Activated CD4-positive, alpha-beta T cell treated with anti-CD3 and anti-CD28 coated beads for 36 hours (primary cell): ENCODE measurements at regions of chr1 and their contacts with region 1.

Region 1: GRCh38 chr1:222307621-222308020 is 240.3 kb downstream of the HHIPL2 start:
- DNase-seq: no peak
- ATAC-seq: no peak
- H3K4me3 Mint-ChIP-seq: no peak overlapping the region
- H3K27ac Mint-ChIP-seq: no peak overlapping the region
- H3K4me1 Mint-ChIP-seq: no peaks in the 10 kb centered on the region
- H3K27me3 Mint-ChIP-seq: no peaks in the 10 kb centered on the region

Region 2: DNA sequence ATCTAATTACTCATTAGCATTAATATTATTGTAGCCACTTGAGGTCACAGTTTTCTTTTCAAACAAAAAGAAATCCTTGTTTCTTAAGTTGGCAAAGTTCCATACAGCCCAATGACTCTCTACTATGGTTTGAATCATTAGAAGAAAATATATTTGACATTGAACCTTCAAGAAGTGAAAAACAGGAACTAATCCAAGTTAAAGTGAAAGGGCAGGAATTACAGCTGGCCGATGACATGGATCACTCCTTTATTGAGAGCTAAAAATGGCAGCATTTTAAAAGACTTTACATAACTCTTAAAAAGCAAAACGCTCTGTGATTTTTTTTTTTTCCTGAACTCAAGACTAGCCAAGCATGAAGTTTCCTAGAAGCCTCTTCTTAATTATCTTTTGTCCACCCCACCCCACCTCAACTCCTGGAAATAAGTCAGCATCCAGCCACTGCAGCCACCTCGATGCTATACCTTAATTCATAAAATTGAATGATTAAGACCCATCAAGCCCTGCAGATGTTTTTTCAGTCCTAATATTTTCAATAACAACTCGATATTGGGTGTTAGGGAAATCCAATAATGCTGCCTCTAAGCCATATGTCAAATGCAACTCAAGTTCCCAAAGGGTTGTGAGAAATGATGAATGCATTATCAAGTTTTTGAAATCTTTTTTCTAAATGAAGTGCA is 82.8 kb before region 1 on chr1:
- CTCF ChIA-PET with region 1: no interaction called
- POLR2A ChIA-PET with region 1: no interaction called
- intact Hi-C with region 1: no loop called
- DNase-seq: no peak
- ATAC-seq: no peak
- H3K4me3 Mint-ChIP-seq: no peak overlapping the region
- H3K27ac Mint-ChIP-seq: no peak overlapping the region
- H3K4me1 Mint-ChIP-seq: no peaks in the 10 kb centered on the region
- H3K27me3 Mint-ChIP-seq: no peaks in the 10 kb centered on the region

Region 3: DNA sequence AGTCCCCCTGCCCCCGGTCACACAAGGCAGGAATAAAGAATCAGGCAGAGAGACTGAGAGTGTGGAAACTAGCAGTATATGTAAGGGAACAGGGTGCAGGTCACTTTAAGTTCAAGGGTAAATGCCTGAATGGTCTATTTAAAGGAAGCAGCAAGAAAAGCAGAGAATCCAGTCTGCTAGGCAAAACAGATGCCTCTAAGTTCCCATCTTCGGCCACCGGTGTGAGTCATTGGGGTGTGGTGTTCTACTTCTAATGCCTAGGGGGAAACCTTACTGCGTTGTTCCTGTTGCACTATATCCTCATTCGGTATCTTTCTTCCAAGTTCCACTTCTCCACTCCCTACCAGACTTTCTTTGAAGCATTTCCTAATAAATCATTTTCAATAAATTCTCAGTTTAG is 19.6 kb before region 1 on chr1:
- CTCF ChIA-PET with region 1: no interaction called
- POLR2A ChIA-PET with region 1: no interaction called
- intact Hi-C with region 1: no loop called
- DNase-seq: no peak
- ATAC-seq: no peak
- H3K4me3 Mint-ChIP-seq: no peak overlapping the region
- H3K27ac Mint-ChIP-seq: no peak overlapping the region
- H3K4me1 Mint-ChIP-seq: no peaks in the 10 kb centered on the region
- H3K27me3 Mint-ChIP-seq: no peaks in the 10 kb centered on the region

Region 4: GRCh38 chr1:222325506-222325905 is 17.9 kb after region 1 on chr1:
- CTCF ChIA-PET with region 1: no interaction called
- POLR2A ChIA-PET with region 1: no interaction called
- intact Hi-C with region 1: loop called in 1 of 2 experiments (anchors 2 kb)
- DNase-seq: no peak
- ATAC-seq: no peak
- H3K4me3 Mint-ChIP-seq: no peak overlapping the region
- H3K27ac Mint-ChIP-seq: no peak overlapping the region
- H3K4me1 Mint-ChIP-seq: peaks cover 5% of the 10 kb centered on the region
- H3K27me3 Mint-ChIP-seq: no peaks in the 10 kb centered on the region